Activated CD8-positive, alpha-beta T cell treated with anti-CD3 and anti-CD28 coated beads, Interleukin-2, amount 10 ng/mL, durations not matched to agents 7 days and 5 days (primary cell): ENCODE measurements at regions of chr14 and their contacts with region 1.

Region 1: GRCh38 chr14:24271134-24271833 is at the start of gene RABGGTA:
- DNase-seq: peak; percentile 93
- ATAC-seq: peak; percentile 94
- H3K4me3 Mint-ChIP-seq: peak within 1 kb of the TSS; percentile 90
- H3K27ac Mint-ChIP-seq: peak within 1 kb of the TSS; percentile 91
- H3K4me1 Mint-ChIP-seq: peaks cover 47% of the 10 kb centered on the region
- H3K27me3 Mint-ChIP-seq: no peaks in the 10 kb centered on the region
- total RNA-seq, gene RABGGTA: 47.7 to 51.8 TPM

Region 2: GRCh38 chr14:24259252-24259995 is 11.9 kb before region 1 on chr14:
- CTCF ChIA-PET with region 1: interaction called, 16 read pairs
- POLR2A ChIA-PET with region 1: interaction called, 13 read pairs
- DNase-seq: no peak
- ATAC-seq: no peak
- H3K4me3 Mint-ChIP-seq: no peak overlapping the region
- H3K27ac Mint-ChIP-seq: no peak overlapping the region
- H3K4me1 Mint-ChIP-seq: no peaks in the 10 kb centered on the region
- H3K27me3 Mint-ChIP-seq: no peaks in the 10 kb centered on the region

Region 3: DNA sequence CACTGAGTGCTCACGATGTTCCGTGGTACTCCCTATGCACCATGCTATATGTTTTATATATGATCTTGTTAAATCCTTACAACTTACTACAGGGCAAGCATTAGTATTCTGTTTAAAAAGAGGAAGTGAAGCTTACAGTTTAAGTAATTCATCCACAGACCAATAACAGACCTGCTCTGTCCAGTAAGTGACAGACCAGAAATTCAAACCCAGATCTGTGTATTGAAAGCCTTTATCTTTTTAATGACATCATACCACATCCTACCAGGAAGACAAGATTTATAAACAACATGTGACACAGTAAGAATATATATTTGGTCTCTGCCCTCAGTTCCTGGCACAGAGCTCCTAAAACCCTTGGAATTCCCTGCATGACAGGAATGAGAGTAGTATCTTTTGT is 572.2 kb after region 1 on chr14:
- CTCF ChIA-PET with region 1: no interaction called
- POLR2A ChIA-PET with region 1: no interaction called
- DNase-seq: no peak
- ATAC-seq: no peak
- H3K4me3 Mint-ChIP-seq: no peak overlapping the region
- H3K27ac Mint-ChIP-seq: no peak overlapping the region
- H3K4me1 Mint-ChIP-seq: no peaks in the 10 kb centered on the region
- H3K27me3 Mint-ChIP-seq: peaks cover 15% of the 10 kb centered on the region